Head of caudate nucleus (tissue), 42 donors: ENCODE measurements at regions of chr11 and their contacts with region 1.

Region 1: GRCh38 chr11:64358907-64359711 is at the start of gene RPS6KA4:
- DNase-seq: peak in 40 of 42 donors; percentile 39 to 82 (median 66)

Region 2: DNA sequence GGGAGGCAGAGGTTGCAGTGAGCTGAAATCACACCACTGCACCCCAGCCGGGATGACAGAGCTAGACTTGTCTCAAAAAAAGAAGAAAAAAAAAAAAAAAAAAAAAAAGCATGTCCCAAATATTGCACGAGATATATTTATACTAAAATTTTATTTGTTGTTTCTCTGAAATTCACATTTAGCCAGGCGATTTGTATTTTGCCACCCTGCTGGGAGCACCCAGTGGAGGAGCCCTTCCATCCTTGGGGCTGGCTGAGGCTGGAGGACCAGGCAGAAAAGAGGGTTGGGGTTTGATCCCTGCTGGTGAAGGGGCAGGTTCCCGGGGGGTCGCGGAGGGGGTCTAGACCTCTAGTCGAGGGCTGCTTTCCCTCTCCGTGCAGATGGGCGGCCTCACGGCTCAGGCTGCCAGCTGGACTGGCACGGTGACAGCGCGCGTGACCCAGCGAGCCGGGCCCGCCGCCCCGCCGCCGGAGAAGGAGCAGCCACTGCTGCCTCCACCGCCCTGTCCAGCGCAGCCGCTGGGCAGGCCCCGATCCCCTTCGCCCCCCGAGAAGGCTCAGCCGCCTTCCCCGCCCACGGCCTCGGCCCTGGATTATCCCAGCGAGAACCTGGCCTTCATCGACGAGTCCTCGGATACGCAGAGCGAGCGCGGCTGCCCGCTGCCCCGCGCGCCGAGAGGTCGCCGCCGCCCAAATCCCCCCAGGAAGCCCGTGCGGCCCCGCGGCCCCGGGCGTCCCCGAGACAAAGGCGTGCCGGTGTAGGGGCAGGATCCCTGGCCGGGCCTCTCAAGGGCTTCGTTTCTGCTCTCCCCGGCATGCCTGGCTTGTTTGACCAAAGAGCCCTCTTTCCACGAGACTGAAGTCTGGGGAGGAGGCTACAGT is 59.9 kb before region 1 on chr11:
- intact Hi-C with region 1: no loop called
- DNase-seq: peak; percentile 49 to 92 (median 81)

Region 3: DNA sequence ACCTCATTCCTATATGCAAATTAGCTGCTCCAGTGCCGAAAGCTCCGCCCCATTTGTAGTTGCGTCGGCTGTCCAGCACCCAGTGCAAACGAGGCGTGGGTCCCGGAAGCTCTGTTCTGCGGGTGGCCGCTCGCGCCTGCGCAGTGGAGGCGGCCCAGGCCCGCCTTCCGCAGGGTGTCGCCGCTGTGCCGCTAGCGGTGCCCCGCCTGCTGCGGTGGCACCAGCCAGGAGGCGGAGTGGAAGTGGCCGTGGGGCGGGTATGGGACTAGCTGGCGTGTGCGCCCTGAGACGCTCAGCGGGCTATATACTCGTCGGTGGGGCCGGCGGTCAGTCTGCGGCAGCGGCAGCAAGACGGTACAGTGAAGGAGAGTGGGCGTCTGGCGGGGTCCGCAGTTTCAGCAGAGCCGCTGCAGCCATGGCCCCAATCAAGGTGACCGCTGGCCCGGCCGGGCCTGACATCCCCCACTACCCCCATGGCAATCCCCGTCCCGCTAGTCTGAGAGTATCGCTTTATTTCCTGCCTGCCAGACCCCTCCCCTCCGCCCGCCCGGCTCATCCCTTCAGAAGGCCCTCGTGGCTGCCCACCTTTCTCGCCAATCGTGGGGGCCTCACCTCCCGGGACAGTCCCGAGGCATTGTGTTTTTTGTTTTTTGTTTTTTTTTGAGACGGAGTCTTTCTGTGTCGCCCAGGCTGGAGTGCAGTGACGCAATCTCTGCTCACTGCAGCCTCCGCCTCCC is 41.0 kb before region 1 on chr11 and contains the start of gene PRDX5:
- intact Hi-C with region 1: loop called (anchors 5 kb)
- DNase-seq: peak; percentile 94 to 99 (median 97)